Prostate gland (tissue), 2 donors: ENCODE measurements at regions of chr7 and their contacts with region 1.

Region 1: DNA sequence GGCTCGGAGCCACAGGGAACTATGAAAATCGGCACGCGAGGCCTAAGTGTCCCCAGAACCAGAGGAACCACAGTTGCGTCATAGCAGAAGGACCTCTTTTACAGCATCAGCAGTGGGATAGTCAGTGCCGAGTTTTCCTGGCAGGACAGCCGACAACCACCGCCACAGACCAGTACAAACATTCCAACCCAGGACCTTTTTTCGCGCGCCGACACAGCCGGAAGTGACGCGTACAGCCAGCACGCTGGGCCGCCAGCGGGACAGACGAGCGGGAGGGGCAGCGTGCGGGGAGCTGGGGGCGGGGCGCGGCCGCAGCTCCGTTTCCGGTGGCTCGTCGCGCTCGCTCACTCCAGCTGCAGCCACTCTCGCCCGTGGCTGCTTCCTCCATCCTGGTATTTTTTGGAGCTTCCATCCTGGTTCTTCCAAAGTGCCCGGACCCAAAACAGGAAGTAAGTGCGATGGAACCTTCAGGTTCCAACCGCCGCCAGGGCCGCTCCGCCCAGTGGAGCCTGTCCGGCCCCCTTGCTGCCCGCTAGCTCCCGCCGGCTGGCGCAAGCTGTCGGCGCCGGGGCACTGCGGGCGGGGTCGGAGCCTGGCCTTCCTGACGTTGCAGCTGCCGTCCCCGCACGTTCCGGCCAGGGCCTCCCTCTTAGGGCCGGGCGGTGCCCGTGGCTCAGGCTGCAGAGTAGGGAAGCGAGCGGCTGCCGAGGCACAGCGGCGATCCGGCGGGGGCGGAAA is at the start of gene DMTF1:
- DNase-seq: peak; percentile 94
- H3K4me3 ChIP-seq: peak within 1 kb of the TSS; percentile 66 to 88
- H3K27ac ChIP-seq: peak within 1 kb of the TSS; percentile 97 to 99
- H3K4me1 ChIP-seq: no peaks in the 10 kb centered on the region
- H3K27me3 ChIP-seq: no peaks in the 10 kb centered on the region
- CTCF ChIP-seq: peak in 2 of 4 experiments; percentile 31 to 37
- POLR2A ChIP-seq: peak; percentile 80
- total RNA-seq, gene DMTF1: 30.7 to 100 TPM

Region 2: DNA sequence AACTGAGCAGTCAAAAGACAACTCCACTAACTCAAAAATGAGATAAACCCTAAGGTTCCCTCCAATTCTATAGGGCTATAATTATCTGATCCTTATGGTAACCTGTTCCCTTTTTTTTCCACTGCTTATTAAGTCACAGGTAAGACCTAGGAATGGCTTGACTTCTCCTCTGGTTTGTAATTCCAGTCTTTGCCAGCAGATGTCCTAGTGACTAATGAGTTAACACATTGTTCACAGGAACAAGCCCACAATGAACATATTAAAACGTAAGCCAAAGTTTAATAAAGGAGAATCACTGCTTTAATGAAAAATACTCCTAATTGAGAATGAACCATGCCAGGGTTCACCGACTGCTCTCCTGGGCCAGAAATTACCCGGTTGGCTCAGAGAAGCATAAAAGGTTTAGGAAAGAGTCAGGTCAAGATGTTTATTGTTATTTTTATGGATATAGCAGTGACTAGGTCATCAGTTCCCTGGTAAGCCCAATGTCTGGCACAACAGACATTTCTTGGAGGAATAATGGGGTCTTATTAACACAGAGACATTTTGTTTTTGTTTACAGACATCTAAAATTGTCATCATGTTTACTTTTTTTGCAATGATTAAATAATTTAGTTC is 213.0 kb before region 1 on chr7:
- intact Hi-C with region 1: loop called (anchors 5 kb)
- DNase-seq: peak; percentile 64
- H3K4me3 ChIP-seq: no peak overlapping the region
- H3K27ac ChIP-seq: no peak overlapping the region
- H3K4me1 ChIP-seq: no peaks in the 10 kb centered on the region
- H3K27me3 ChIP-seq: no peaks in the 10 kb centered on the region
- CTCF ChIP-seq: peak; percentile 40 to 82 (median 68)
- POLR2A ChIP-seq: no peak

Region 3: DNA sequence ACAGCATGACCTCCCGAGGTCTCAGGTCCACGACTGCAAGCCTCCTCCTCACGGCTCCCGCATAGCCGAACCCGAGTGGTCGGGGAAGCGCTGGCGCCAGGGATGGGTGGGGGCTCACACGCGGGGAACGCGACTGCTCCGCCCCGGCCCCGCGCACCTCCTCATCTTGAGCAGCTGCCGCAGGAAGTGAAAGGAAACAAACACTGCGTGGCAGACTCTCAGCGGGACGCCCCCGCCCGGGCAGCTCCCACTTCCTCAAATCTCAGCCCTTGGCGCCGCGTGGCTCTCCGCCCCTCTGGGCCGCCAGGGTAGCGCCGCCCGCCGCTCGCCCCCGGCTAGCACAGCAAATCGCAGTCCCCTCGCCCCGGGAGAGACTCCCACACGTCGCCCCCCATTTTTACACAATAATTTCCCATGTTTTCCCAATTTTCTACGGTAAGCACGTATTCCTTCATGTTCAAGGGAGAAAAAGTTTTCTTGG is 67.3 kb after region 1 on chr7 and contains the start of gene TMEM243:
- intact Hi-C with region 1: loop called (anchors 5 kb)
- DNase-seq: peak; percentile 73
- H3K4me3 ChIP-seq: peak within 1 kb of the TSS; percentile 62 to 85
- H3K27ac ChIP-seq: peak within 1 kb of the TSS; percentile 81 to 84
- H3K4me1 ChIP-seq: no peaks in the 10 kb centered on the region
- H3K27me3 ChIP-seq: no peaks in the 10 kb centered on the region
- CTCF ChIP-seq: peak in 3 of 4 experiments; percentile 14 to 43 (median 23)
- POLR2A ChIP-seq: peak; percentile 63
- total RNA-seq, gene TMEM243: 23.3 to 39.7 TPM

Region 4: DNA sequence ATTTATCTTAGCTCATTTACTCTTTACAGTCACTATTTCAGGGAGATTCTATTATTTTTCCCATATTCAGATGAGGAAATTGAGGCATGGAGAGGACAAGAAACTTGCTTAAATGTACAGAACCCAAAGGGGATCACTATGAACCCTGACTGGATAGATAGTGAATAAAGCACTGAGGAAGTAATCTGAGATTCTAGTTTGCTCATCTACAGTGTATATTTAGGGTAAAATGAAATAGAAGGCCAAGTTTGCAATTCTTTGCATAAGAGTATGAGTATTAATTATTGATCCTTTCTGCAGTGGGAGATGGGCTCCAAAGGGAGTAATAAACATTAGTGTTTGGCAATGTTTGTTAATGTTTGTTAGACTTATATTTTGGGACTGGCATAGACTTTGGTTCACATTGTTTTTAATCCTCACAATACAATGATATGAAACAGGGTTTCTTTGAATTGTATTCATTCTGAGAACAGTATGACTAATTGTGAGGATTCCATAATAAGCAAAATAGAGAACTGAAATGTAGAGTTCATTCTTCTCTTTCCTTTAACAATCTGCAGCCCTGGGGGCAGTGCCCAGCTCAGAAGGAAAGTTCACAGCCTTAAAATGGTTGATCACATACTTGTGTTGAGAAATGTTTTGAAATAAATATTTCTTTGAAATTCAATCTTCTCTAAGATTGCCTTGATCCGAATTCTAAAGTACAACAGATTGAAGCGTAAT is 1476.2 kb after region 1 on chr7:
- intact Hi-C with region 1: no loop called
- DNase-seq: no peak
- H3K4me3 ChIP-seq: no peak overlapping the region
- H3K27ac ChIP-seq: no peak overlapping the region
- H3K4me1 ChIP-seq: no peaks in the 10 kb centered on the region
- H3K27me3 ChIP-seq: no peaks in the 10 kb centered on the region
- CTCF ChIP-seq: no peak
- POLR2A ChIP-seq: no peak